Right ventricle myocardium inferior (tissue), 1 donor: ENCODE measurements at regions of chr5 and their contacts with region 1.

Region 1: GRCh38 chr5:137735555-137736284 is at the start of gene KLHL3:
- DNase-seq: no peak
- ATAC-seq: peak; percentile 45
- total RNA-seq, gene KLHL3: 23.3 TPM

Region 2: DNA sequence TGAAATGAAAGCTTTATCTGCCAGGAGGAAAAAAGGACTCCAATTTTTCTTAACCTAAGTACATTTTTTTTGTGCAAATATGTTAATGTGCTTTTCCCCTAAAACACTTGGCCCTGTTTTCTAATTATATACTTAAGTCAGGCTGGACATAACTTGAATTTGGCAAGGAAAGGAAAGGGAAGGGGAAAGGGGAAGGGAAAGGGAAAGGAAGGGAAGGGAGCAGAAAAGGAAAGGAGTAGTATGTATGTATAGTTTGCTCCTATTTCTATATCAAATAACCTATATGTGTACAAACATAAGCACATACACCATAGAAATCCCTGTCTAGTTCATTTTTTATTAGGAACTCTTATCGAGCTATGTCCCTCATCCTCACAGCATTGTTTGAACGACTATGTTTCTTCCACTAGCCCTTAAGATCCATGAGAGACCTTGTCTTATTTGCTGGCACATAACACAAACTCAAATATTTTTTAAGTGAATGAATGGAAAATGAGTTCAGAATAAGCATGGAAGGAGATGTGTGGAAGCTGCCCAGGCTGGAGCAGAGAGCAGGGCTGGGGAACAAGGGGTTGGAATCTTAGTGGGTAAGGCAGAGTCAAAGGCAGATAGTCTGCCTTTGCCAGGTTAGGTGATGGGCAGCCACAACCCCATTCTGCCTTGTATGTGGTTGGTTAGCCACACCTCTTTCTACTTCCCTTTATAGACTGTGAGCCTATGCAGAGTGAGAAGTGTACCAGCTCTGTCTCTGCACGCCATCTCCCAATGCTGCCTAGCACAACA is 69.9 kb before region 1 on chr5:
- intact Hi-C with region 1: loop called (anchors 2 kb)
- DNase-seq: no peak
- ATAC-seq: peak; percentile 90

Region 3: GRCh38 chr5:137695651-137696428 is 39.9 kb before region 1 on chr5:
- intact Hi-C with region 1: loop called (anchors 5 kb)
- DNase-seq: no peak
- ATAC-seq: no peak

Region 4: DNA sequence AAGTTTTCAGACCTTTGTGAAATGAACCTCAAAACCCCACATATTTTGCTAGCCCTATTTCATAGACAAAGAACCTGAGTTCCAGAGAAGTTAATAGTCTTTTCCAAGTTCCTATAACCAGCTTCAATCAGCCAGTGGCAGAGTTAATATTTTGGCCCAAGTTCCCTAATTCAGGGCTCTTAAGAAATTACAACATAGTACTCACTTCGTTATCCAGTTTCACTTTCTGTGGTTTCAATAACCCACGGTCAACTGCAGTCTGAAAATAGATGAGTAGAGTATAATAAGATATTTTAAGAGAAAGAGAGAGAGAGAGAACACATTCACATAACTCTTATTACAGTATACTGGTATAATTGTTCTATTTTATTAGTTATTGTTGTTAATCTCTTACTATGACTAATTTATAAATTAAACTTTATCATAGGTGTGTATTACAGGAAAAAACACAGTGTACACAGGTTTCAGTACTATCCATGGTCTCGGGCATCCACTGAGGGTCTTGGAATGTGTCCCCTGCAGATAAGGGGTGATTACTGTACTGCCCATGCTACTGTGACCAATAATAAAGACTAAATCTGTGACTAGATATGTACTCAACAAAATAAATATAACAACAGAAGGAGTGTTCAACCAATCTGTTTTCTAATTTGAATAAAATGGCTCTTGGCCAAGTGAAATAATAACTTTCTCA is 122.7 kb after region 1 on chr5:
- intact Hi-C with region 1: no loop called
- DNase-seq: no peak
- ATAC-seq: peak; percentile 85